Calu3 (cell line): ENCODE measurements at regions of chr4 and their contacts with region 1.

Region 1: DNA sequence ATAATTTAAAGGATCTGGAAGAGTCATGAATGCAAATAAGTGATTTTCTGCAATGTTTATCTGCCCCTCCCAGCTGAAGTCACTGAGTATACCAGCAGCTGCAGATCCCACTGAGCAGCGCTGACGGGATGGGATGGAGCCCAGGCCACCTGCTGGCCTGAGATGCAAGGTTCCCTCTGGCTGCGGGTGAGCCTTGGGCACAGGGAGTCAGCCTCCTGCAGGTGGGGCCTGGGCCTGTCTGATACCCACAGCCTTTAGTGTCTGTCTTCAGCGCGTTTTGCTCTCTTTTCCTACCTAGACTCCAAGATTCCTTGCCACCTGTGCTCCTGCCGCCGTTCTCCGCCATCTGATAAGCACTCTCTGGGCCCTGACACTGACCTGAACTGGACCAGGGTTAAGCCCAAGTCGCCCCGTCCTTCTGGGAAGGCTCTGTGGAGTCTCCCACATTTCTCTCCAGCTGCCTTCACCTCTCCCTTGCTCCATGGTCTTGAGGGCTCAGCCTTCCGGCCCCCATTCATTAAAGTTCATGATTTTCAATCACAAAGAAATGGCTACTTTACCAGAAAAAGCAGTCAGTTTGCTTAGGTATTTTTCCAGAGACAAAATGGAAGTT is 223.1 kb upstream of the FAT1 start:
- DNase-seq: peak; percentile 77
- H3K4me3 Mint-ChIP-seq: no peak overlapping the region
- H3K27ac Mint-ChIP-seq: no peak overlapping the region
- H3K4me1 Mint-ChIP-seq: peaks cover 25% of the 10 kb centered on the region
- H3K27me3 Mint-ChIP-seq: no peaks in the 10 kb centered on the region
- CTCF ChIP-seq: peak; percentile 42

Region 2: GRCh38 chr4:187606581-187606980 is 659.8 kb after region 1 on chr4:
- CTCF ChIA-PET with region 1: no interaction called
- intact Hi-C with region 1: loop called (anchors 10 kb)
- DNase-seq: peak; percentile 36
- H3K4me3 Mint-ChIP-seq: no peak overlapping the region
- H3K27ac Mint-ChIP-seq: no peak overlapping the region
- H3K4me1 Mint-ChIP-seq: peaks cover 7% of the 10 kb centered on the region
- H3K27me3 Mint-ChIP-seq: no peaks in the 10 kb centered on the region
- CTCF ChIP-seq: peak; percentile 76